ENCODE measurements at regions of chr7 and their contacts with region 1.

Region 1: DNA sequence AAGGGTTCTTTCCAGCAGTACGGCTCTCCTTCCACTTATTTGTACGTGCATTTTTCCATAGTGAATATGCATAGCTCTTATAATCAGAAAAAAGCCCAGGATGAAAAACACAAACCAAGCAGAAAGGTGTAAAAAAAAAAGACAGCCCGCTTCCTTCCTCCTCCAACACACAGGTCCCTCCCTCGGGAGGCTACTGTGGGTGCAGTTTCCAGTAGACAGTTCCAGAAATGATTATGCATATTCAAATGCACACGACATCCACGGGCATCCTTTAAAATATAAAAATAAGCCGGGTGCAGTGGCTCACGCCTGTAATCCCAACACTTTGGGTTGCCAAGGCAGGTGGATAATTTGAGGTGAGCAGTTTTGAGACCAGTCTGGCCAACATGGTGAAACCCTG is 59.9 kb downstream of the TNRC18 start:
- DNase-seq: no peak
- ATAC-seq: no peak
- H3K4me3 ChIP-seq: no peak overlapping the region
- H3K4me3 Mint-ChIP-seq: no peak overlapping the region
- H3K27ac ChIP-seq: no peak overlapping the region
- H3K27ac Mint-ChIP-seq: no peak overlapping the region
- H3K4me1 ChIP-seq: peaks cover 15% of the 10 kb centered on the region
- H3K4me1 Mint-ChIP-seq: peaks cover 15% of the 10 kb centered on the region
- H3K27me3 ChIP-seq: no peaks in the 10 kb centered on the region
- H3K27me3 Mint-ChIP-seq: no peaks in the 10 kb centered on the region
- CTCF ChIP-seq: no peak

Region 2: GRCh38 chr7:5243261-5243660 is 120.5 kb before region 1 on chr7:
- CTCF ChIA-PET with region 1: no interaction called
- POLR2A ChIA-PET with region 1: no interaction called
- intact Hi-C with region 1: loop called in 1 of 2 experiments (anchors 5 kb)
- DNase-seq: no peak
- ATAC-seq: no peak
- H3K4me3 ChIP-seq: no peak overlapping the region
- H3K4me3 Mint-ChIP-seq: no peak overlapping the region
- H3K27ac ChIP-seq: no peak overlapping the region
- H3K27ac Mint-ChIP-seq: no peak overlapping the region
- H3K4me1 ChIP-seq: peaks cover 16% of the 10 kb centered on the region
- H3K4me1 Mint-ChIP-seq: peaks cover 11% of the 10 kb centered on the region
- H3K27me3 ChIP-seq: peaks cover 0 to 6% of the 10 kb centered on the region in 2 experiments
- H3K27me3 Mint-ChIP-seq: peaks cover 13% of the 10 kb centered on the region
- CTCF ChIP-seq: no peak

Region 3: DNA sequence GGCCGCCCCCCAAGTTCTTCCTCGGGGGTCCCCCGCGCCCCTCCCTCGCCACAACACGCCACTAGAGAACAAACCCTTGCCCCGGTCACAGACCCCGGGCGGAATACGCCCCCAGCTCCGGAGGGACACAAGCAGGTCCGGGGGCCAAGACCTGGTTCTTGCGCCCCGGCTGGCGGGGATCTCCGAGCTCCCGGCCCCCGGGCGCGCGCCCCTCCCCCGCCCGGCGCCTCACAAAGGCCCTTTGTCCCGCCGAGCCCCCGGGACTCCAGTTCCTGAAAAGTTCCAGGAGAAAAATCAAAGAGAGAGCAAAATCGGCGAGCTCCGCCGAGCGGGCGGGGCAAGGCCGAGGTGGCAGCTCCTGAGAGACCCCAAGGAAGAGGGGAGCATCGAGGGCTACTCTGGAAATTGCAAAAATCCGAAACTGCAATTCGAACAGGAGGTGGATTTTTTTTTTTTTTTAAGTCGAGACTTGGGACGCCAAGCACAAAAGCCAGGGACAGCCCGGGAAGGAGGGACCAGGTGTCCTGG is 55.9 kb after region 1 on chr7:
- CTCF ChIA-PET with region 1: no interaction called
- POLR2A ChIA-PET with region 1: no interaction called
- intact Hi-C with region 1: no loop called
- DNase-seq: no peak
- ATAC-seq: no peak
- H3K4me3 ChIP-seq: peak overlapping the region; percentile 35
- H3K4me3 Mint-ChIP-seq: peak overlapping the region; percentile 85
- H3K27ac ChIP-seq: no peak overlapping the region
- H3K27ac Mint-ChIP-seq: no peak overlapping the region
- H3K4me1 ChIP-seq: peaks cover 64% of the 10 kb centered on the region
- H3K4me1 Mint-ChIP-seq: peaks cover 42% of the 10 kb centered on the region
- H3K27me3 ChIP-seq: peaks cover 66 to 70% of the 10 kb centered on the region in 2 experiments
- H3K27me3 Mint-ChIP-seq: peaks cover 68% of the 10 kb centered on the region
- CTCF ChIP-seq: no peak

Region 4: GRCh38 chr7:5450549-5451372 is 87.0 kb after region 1 on chr7:
- CTCF ChIA-PET with region 1: interaction called, 13 read pairs
- POLR2A ChIA-PET with region 1: no interaction called
- intact Hi-C with region 1: loop called (anchors 1 kb)
- DNase-seq: peak in 11 of 14 experiments; percentile 20 to 69 (median 41)
- ATAC-seq: peak; percentile 68
- H3K4me3 ChIP-seq: no peak overlapping the region
- H3K4me3 Mint-ChIP-seq: no peak overlapping the region
- H3K27ac ChIP-seq: no peak overlapping the region
- H3K27ac Mint-ChIP-seq: no peak overlapping the region
- H3K4me1 ChIP-seq: no peaks in the 10 kb centered on the region
- H3K4me1 Mint-ChIP-seq: no peaks in the 10 kb centered on the region
- H3K27me3 ChIP-seq: peaks cover 0 to 3% of the 10 kb centered on the region in 2 experiments
- H3K27me3 Mint-ChIP-seq: peaks cover 4% of the 10 kb centered on the region
- CTCF ChIP-seq: peak; percentile 71

Measured in CD4-positive, alpha-beta T cell (primary cell).